ENCODE measurements at regions of chr16 and their contacts with region 1.

Region 1: DNA sequence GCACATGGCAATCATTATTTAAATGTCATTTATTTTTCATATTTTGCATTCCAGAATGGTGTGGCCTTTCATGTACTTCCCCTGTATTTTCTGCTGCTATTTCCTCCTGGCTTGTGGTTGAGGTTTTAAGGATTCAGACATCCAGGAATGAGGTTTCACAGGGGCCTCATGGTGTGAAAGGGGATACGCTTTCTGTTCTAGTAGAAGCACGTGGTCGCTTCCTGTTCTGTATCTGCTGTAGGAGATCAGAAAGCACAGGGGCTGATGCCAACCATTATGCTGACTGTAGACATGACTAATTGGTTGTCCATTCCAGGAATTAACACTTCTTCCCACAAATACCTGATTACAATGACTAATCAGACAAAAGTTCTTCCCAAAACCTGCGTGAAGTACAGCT is 405.9 kb downstream of the SHISA9 start:
- DNase-seq: peak; percentile 91
- H3K4me3 Mint-ChIP-seq: peak overlapping the region; percentile 38
- H3K27ac Mint-ChIP-seq: no peak overlapping the region
- H3K4me1 Mint-ChIP-seq: peaks cover 20% of the 10 kb centered on the region
- H3K27me3 Mint-ChIP-seq: no peaks in the 10 kb centered on the region
- CTCF ChIP-seq: no peak

Region 2: DNA sequence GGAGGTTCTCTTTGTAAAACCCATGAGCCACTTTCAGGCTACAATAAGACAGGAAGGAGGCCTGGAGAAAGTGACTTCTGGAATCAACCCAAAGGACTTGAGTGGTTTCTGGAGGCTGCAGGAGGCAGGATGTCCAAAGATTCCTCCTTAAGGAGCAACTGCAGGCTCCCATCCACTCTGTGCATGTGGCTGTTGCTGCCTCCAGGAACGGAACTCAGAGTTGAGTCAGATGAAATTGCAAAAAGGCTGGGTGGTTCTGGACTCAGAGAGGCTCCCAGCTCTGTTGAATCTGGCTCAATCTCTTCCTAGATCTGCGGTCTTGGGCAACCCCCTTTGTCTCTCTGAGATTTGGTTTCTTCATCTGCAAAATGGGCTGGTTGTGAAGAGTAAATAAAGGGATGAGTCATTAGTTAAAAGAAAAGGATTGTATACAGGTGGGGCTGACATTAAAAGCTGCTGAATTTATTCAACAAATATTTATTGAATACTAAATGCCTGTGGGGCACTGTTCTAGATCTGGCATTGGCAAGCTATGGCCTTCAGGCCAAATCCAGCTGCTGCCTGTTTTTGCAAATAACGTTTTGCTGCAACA is 208.6 kb before region 1 on chr16:
- CTCF ChIA-PET with region 1: no interaction called
- POLR2A ChIA-PET with region 1: no interaction called
- intact Hi-C with region 1: no loop called
- DNase-seq: peak; percentile 88
- H3K4me3 Mint-ChIP-seq: no peak overlapping the region
- H3K27ac Mint-ChIP-seq: peak overlapping the region; percentile 44
- H3K4me1 Mint-ChIP-seq: peaks cover 19% of the 10 kb centered on the region
- H3K27me3 Mint-ChIP-seq: no peaks in the 10 kb centered on the region
- CTCF ChIP-seq: no peak

Region 3: GRCh38 chr16:13402601-13403000 is 95.3 kb after region 1 on chr16:
- CTCF ChIA-PET with region 1: no interaction called
- POLR2A ChIA-PET with region 1: no interaction called
- intact Hi-C with region 1: loop called (anchors 10 kb)
- DNase-seq: peak; percentile 77
- H3K4me3 Mint-ChIP-seq: no peak overlapping the region
- H3K27ac Mint-ChIP-seq: peak overlapping the region; percentile 23
- H3K4me1 Mint-ChIP-seq: peaks cover 12% of the 10 kb centered on the region
- H3K27me3 Mint-ChIP-seq: no peaks in the 10 kb centered on the region
- CTCF ChIP-seq: no peak

Region 4: GRCh38 chr16:13645591-13646245 is 338.5 kb after region 1 on chr16:
- CTCF ChIA-PET with region 1: no interaction called
- POLR2A ChIA-PET with region 1: no interaction called
- intact Hi-C with region 1: no loop called
- DNase-seq: no peak
- H3K4me3 Mint-ChIP-seq: no peak overlapping the region
- H3K27ac Mint-ChIP-seq: no peak overlapping the region
- H3K4me1 Mint-ChIP-seq: no peaks in the 10 kb centered on the region
- H3K27me3 Mint-ChIP-seq: peaks cover 11% of the 10 kb centered on the region
- CTCF ChIP-seq: no peak